ENCODE measurements at regions of chr19 and their contacts with region 1.

Region 1: GRCh38 chr19:13262450-13262849 is 112.2 kb downstream of the IER2 start:
- DNase-seq: peak; percentile 8
- H3K4me3 Mint-ChIP-seq: no peak overlapping the region
- H3K27ac Mint-ChIP-seq: no peak overlapping the region
- H3K4me1 Mint-ChIP-seq: peaks cover 17% of the 10 kb centered on the region
- H3K27me3 Mint-ChIP-seq: peaks cover 17% of the 10 kb centered on the region

Region 2: GRCh38 chr19:13132471-13133180 is 129.8 kb before region 1 on chr19:
- intact Hi-C with region 1: loop called (anchors 1 kb)
- DNase-seq: peak; percentile 46
- H3K4me3 Mint-ChIP-seq: peak overlapping the region; percentile 77
- H3K27ac Mint-ChIP-seq: peak overlapping the region; percentile 90
- H3K4me1 Mint-ChIP-seq: peaks cover 41% of the 10 kb centered on the region
- H3K27me3 Mint-ChIP-seq: no peaks in the 10 kb centered on the region

Region 3: DNA sequence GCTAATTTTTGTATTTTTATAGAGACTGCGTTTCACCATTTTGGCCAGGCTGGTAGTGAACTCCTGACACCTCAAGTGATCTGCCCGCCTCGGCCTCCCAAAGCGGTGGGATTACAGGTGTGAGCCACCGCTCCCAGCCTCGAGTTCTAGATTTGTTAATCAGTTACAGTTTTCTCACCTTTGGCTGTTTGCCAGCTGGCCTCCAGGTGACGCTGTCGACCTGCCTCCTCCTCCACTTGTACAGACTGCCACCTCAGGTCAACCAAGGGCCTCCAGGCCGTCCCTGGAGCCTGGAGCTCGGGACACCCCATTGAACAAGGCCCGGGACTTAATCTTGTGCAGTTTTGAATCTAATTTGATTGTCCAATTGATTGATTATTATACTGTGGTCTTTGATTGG is 66.8 kb before region 1 on chr19:
- intact Hi-C with region 1: loop called (anchors 1 kb)
- DNase-seq: peak; percentile 32
- H3K4me3 Mint-ChIP-seq: no peak overlapping the region
- H3K27ac Mint-ChIP-seq: no peak overlapping the region
- H3K4me1 Mint-ChIP-seq: peaks cover 15% of the 10 kb centered on the region
- H3K27me3 Mint-ChIP-seq: no peaks in the 10 kb centered on the region

Measured in activated T-helper 1 cell treated with anti-CD3 and anti-CD28 coated beads, Interleukin-12 subunit alpha, Interleukin-12 subunit beta, Interleukin-2, Interleukin-4 antibody, amounts not matched to agents 30 ng/mL and 10 ng/mL and 1 ng/mL, durations not matched to agents 14 hours and 24 hours and 36 hours (primary cell).